MCF 10A (cell line): ENCODE measurements at regions of chr11 and their contacts with region 1.

Region 1: GRCh38 chr11:118145285-118146227 is 7.1 kb downstream of the SCN4B start:
- DNase-seq: peak; percentile 88
- H3K4me3 Mint-ChIP-seq: peak overlapping the region; percentile 74
- H3K27ac Mint-ChIP-seq: peak overlapping the region; percentile 66
- H3K4me1 Mint-ChIP-seq: peaks cover 15% of the 10 kb centered on the region
- H3K27me3 Mint-ChIP-seq: peaks cover 15% of the 10 kb centered on the region
- CTCF ChIP-seq: peak; percentile 92

Region 2: GRCh38 chr11:118117790-118118601 is 27.6 kb before region 1 on chr11:
- CTCF ChIA-PET with region 1: no interaction called
- POLR2A ChIA-PET with region 1: no interaction called
- intact Hi-C with region 1: no loop called
- DNase-seq: no peak
- H3K4me3 Mint-ChIP-seq: no peak overlapping the region
- H3K27ac Mint-ChIP-seq: no peak overlapping the region
- H3K4me1 Mint-ChIP-seq: no peaks in the 10 kb centered on the region
- H3K27me3 Mint-ChIP-seq: peaks cover 40% of the 10 kb centered on the region
- CTCF ChIP-seq: no peak

Region 3: GRCh38 chr11:118290923-118291322 is 145.4 kb after region 1 on chr11:
- CTCF ChIA-PET with region 1: interaction called, 10 read pairs
- POLR2A ChIA-PET with region 1: interaction called, 3 read pairs
- intact Hi-C with region 1: loop called (anchors 1 kb)
- DNase-seq: peak; percentile 75
- H3K4me3 Mint-ChIP-seq: peak overlapping the region; percentile 19
- H3K27ac Mint-ChIP-seq: no peak overlapping the region
- H3K4me1 Mint-ChIP-seq: peaks cover 19% of the 10 kb centered on the region
- H3K27me3 Mint-ChIP-seq: no peaks in the 10 kb centered on the region
- CTCF ChIP-seq: peak; percentile 43

Region 4: DNA sequence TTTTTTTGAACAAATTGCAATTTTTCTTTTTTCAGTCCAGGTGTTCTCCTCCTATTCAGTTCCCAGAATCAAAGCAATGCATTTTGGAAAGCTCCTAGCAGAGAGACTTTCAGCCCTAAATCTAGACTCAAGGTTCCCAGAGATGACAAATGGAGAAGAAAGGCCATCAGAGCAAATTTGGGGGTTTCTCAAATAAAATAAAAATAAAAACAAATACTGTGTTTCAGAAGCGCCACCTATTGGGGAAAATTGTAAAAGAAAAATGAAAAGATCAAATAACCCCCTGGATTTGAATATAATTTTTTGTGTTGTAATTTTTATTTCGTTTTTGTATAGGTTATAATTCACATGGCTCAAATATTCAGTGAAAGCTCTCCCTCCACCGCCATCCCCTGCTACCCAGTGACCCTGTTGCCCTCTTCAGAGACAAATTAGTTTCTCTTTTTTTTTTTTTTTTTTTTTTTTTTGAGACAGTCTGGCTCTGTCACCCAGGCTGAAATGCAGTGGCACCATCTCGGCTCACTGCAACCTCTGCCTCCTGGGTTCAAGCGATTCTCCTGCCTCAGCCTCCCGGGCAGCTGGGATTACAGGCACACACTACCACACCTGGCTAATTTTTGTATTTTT is 207.6 kb after region 1 on chr11:
- CTCF ChIA-PET with region 1: interaction called, 5 read pairs
- POLR2A ChIA-PET with region 1: no interaction called
- intact Hi-C with region 1: loop called (anchors 1 kb)
- DNase-seq: peak; percentile 43
- H3K4me3 Mint-ChIP-seq: no peak overlapping the region
- H3K27ac Mint-ChIP-seq: no peak overlapping the region
- H3K4me1 Mint-ChIP-seq: no peaks in the 10 kb centered on the region
- H3K27me3 Mint-ChIP-seq: peaks cover 32% of the 10 kb centered on the region
- CTCF ChIP-seq: peak; percentile 51

Region 5: DNA sequence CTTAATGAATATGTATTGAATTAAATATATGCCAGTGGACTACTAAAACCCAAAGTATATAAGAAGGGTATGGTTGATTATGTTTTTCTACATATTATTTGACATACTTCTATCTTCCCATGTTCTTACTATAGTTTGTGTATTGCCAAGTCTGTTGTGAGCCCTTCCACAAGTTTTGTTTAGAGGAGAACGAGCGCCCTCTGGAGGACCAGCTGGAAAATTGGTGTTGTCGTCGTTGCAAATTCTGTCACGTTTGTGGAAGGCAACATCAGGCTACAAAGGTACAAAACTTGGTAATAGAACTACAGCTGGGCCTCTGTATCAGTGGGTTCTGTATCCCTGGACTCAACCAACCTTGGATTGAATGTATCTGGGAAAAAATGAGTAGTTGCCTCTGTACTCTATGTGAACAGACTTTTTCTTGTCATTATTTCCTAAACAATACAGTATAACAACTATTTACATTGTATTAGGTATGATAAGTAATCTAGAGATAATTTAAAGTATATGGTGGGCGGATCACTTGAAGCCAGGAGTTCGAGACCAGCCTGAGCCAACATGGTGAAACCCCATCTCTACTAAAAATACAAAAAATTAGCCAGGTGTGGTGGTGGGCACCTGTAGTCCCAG is 343.0 kb after region 1 on chr11:
- CTCF ChIA-PET with region 1: interaction called, 5 read pairs
- POLR2A ChIA-PET with region 1: no interaction called
- intact Hi-C with region 1: loop called (anchors 5 kb)
- DNase-seq: peak; percentile 78
- H3K4me3 Mint-ChIP-seq: no peak overlapping the region
- H3K27ac Mint-ChIP-seq: no peak overlapping the region
- H3K4me1 Mint-ChIP-seq: no peaks in the 10 kb centered on the region
- H3K27me3 Mint-ChIP-seq: no peaks in the 10 kb centered on the region
- CTCF ChIP-seq: peak; percentile 74

Region 6: GRCh38 chr11:118565051-118565450 is 419.5 kb after region 1 on chr11:
- CTCF ChIA-PET with region 1: interaction called, 3 read pairs
- POLR2A ChIA-PET with region 1: no interaction called
- intact Hi-C with region 1: loop called (anchors 5 kb)
- DNase-seq: no peak
- H3K4me3 Mint-ChIP-seq: peak overlapping the region; percentile 91
- H3K27ac Mint-ChIP-seq: peak overlapping the region; percentile 96
- H3K4me1 Mint-ChIP-seq: peaks cover 5% of the 10 kb centered on the region
- H3K27me3 Mint-ChIP-seq: no peaks in the 10 kb centered on the region
- CTCF ChIP-seq: no peak

Region 7: GRCh38 chr11:118659314-118659952 is 513.9 kb after region 1 on chr11:
- CTCF ChIA-PET with region 1: no interaction called
- POLR2A ChIA-PET with region 1: no interaction called
- intact Hi-C with region 1: loop called (anchors 5 kb)
- DNase-seq: peak; percentile 84
- H3K4me3 Mint-ChIP-seq: no peak overlapping the region
- H3K27ac Mint-ChIP-seq: no peak overlapping the region
- H3K4me1 Mint-ChIP-seq: no peaks in the 10 kb centered on the region
- H3K27me3 Mint-ChIP-seq: no peaks in the 10 kb centered on the region
- CTCF ChIP-seq: peak; percentile 96